ENCODE measurements at regions of chr6 and their contacts with region 1.

Region 1: GRCh38 chr6:159968440-159969203 is at the start of gene IGF2R:
- DNase-seq: peak; percentile 92
- H3K4me3 Mint-ChIP-seq: peak within 1 kb of the TSS; percentile 79
- H3K27ac Mint-ChIP-seq: peak within 1 kb of the TSS; percentile 67
- H3K4me1 Mint-ChIP-seq: peaks cover 34% of the 10 kb centered on the region
- H3K27me3 Mint-ChIP-seq: no peaks in the 10 kb centered on the region
- CTCF ChIP-seq: peak; percentile 13
- total RNA-seq, gene IGF2R: 160 and 234 TPM in 2 replicates

Region 2: GRCh38 chr6:159953091-159953601 is 15.5 kb before region 1 on chr6:
- CTCF ChIA-PET with region 1: interaction called, 9 read pairs
- POLR2A ChIA-PET with region 1: interaction called, 14 read pairs
- intact Hi-C with region 1: no loop called
- DNase-seq: peak; percentile 90
- H3K4me3 Mint-ChIP-seq: peak overlapping the region; percentile 35
- H3K27ac Mint-ChIP-seq: peak overlapping the region; percentile 44
- H3K4me1 Mint-ChIP-seq: peaks cover 9% of the 10 kb centered on the region
- H3K27me3 Mint-ChIP-seq: no peaks in the 10 kb centered on the region
- CTCF ChIP-seq: no peak

Region 3: DNA sequence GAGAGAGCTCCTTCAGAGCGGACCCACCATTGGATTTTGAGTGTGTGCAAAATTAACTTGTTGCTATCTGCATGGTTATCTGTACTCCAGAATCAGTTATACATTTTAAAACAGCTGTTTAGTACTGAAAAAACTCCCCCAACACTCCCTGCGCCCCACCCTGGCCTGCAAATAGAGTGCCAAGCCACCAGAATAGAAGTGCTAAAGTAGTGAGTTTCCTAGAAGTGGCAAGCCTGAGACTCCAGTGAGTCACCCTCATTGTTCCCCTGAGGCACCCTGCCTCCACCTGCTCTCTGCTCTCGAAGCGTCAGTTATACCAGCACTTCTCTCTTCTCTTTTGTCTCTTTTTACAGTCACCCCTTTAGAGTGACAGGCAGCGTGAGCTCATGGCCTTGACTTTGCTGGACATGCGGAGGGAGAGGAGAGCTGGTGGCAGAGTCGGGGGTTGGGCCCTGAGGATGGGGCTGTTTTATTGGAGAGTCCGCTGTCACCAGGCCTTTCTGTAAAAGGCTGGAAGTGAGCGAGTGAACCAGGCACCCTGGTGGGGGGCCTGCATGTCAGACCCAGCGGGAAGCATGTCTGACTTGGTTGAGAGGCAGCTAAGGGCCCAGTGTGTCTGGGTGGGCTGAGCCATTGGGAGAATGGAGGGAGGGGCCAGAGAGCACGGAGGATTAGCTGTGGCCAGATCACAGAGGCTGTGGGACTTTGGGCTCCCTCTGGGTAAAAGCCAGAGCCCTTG is 10.7 kb after region 1 on chr6:
- CTCF ChIA-PET with region 1: interaction called, 3 read pairs
- POLR2A ChIA-PET with region 1: interaction called, 32 read pairs
- intact Hi-C with region 1: no loop called
- DNase-seq: peak; percentile 84
- H3K4me3 Mint-ChIP-seq: peak overlapping the region; percentile 17
- H3K27ac Mint-ChIP-seq: peak overlapping the region; percentile 47
- H3K4me1 Mint-ChIP-seq: peaks cover 75% of the 10 kb centered on the region
- H3K27me3 Mint-ChIP-seq: no peaks in the 10 kb centered on the region
- CTCF ChIP-seq: no peak

Region 4: DNA sequence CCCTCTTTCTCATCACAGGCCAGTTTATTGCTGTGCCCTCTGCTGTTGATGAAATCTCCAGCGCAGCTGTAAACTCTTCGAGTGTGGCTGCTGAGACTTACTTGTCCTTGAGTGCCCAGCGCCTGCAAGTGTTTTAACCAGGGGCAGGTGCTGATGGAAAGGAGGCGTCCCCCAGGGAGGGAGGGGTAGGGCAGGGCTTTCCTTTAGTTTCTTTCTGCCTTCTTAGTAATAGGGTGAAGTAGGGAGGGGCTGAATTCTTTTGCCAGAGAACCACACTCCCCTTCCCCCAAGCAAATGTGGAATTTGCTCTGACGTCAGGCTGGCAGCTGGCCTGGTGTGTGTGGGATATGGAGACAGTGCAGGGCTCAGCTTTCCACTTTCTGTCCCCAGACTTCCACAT is 61.5 kb after region 1 on chr6:
- CTCF ChIA-PET with region 1: interaction called, 4 read pairs
- POLR2A ChIA-PET with region 1: interaction called, 25 read pairs
- intact Hi-C with region 1: no loop called
- DNase-seq: peak; percentile 92
- H3K4me3 Mint-ChIP-seq: peak overlapping the region; percentile 63
- H3K27ac Mint-ChIP-seq: peak overlapping the region; percentile 95
- H3K4me1 Mint-ChIP-seq: peaks cover 38% of the 10 kb centered on the region
- H3K27me3 Mint-ChIP-seq: no peaks in the 10 kb centered on the region
- CTCF ChIP-seq: no peak

Measured in MCF 10A (cell line).